Left ventricle myocardium superior (tissue), 1 donor: ENCODE measurements at regions of chr1 and their contacts with region 1.

Region 1: GRCh38 chr1:203117611-203118575 is 9.6 kb upstream of the ADORA1 start:
- DNase-seq: peak; percentile 88
- ATAC-seq: peak; percentile 98

Region 2: GRCh38 chr1:203172128-203173010 is 54.5 kb after region 1 on chr1:
- intact Hi-C with region 1: loop called (anchors 5 kb)
- DNase-seq: peak; percentile 72
- ATAC-seq: peak; percentile 80